ENCODE measurements at regions of chr11 and their contacts with region 1.

Region 1: GRCh38 chr11:32893343-32894148 is 935 bp downstream of the QSER1 start:
- DNase-seq: peak in 6 of 9 donors; percentile 34 to 67 (median 42)
- ATAC-seq: peak; percentile 47
- H3K4me3 ChIP-seq: peak overlapping the region; percentile 71
- H3K4me3 Mint-ChIP-seq: peak overlapping the region; percentile 83 to 96 (median 94)
- H3K27ac ChIP-seq: peak overlapping the region; percentile 71
- H3K27ac Mint-ChIP-seq: peak overlapping the region; percentile 58 to 95 (median 80)
- H3K4me1 ChIP-seq: peaks cover 5 to 15% of the 10 kb centered on the region in 2 donors
- H3K4me1 Mint-ChIP-seq: peaks cover 26 to 46% (median 38%) of the 10 kb centered on the region in 7 donors
- H3K27me3 ChIP-seq: no peaks in the 10 kb centered on the region
- H3K27me3 Mint-ChIP-seq: peaks cover 0 to 21% (median 0%) of the 10 kb centered on the region in 5 donors

Region 2: DNA sequence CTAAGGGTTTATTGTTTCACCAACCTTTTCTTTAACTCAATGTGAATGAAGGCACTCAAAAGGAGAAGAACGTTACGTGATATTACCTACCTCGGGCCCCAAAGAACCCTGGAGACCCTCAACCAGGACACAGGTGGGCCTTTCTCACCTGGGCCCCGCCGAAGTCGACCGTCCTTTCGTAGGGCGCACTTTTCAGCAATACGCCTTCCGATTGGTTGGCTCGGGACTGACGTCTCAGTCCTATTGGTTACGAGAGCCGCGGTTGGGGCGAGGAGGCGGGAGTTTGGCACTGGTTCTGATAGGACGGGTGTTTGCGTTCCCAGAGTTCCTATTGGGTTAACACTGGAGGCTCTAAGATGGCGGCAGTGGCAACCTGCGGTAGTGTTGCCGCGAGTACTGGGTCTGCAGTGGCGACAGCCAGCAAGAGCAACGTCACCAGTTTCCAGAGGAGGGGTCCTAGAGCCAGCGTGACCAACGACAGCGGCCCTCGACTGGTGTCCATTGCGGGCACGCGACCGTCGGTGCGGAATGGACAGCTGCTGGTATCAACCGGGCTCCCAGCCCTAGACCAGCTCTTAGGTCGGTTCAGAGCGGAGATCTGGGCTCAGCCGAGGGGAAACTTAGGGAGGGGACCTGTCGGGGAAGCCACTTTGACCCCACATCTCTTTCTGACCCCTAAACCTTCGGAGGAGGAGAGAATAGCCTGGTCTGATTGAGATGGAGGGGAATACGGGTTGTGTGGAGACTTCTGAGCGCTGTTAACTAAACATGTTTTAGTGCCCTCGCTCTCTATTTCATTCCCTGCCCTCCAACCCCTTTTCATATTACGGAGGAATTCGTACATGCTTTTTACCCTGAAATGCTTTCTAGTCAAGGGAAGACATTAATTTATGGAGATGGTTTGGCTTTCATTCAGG is 1383.9 kb before region 1 on chr11 and contains the starts of genes ELP4 and IMMP1L:
- CTCF ChIA-PET with region 1: no interaction called
- POLR2A ChIA-PET with region 1: no interaction called
- intact Hi-C with region 1: loop called in 1 of 2 experiments (anchors 2 kb)
- DNase-seq: peak; percentile 86 to 97 (median 95)
- ATAC-seq: peak; percentile 100
- H3K4me3 ChIP-seq: peak within 1 kb of the TSS; percentile 85
- H3K4me3 Mint-ChIP-seq: peak within 1 kb of the TSS; percentile 89 to 100 (median 99)
- H3K27ac ChIP-seq: peak within 1 kb of the TSS; percentile 79
- H3K27ac Mint-ChIP-seq: peak within 1 kb of the TSS; percentile 92 to 100 (median 98)
- H3K4me1 ChIP-seq: peaks cover 13 to 14% of the 10 kb centered on the region in 2 donors
- H3K4me1 Mint-ChIP-seq: peaks cover 21 to 70% (median 49%) of the 10 kb centered on the region in 7 donors
- H3K27me3 ChIP-seq: no peaks in the 10 kb centered on the region
- H3K27me3 Mint-ChIP-seq: peaks cover 0 to 2% (median 0%) of the 10 kb centered on the region in 5 donors
- total RNA-seq, gene ELP4: 16.8 to 23.2 (median 21.2) TPM
- total RNA-seq, gene IMMP1L: 9.4 to 20.0 (median 16.1) TPM

Region 3: GRCh38 chr11:32829680-32830412 is 63.7 kb before region 1 on chr11 and contains the start of gene PRRG4:
- CTCF ChIA-PET with region 1: no interaction called
- POLR2A ChIA-PET with region 1: no interaction called
- intact Hi-C with region 1: loop called in 1 of 2 experiments (anchors 2 kb)
- DNase-seq: peak in 3 of 9 donors; percentile 7 to 68 (median 31)
- ATAC-seq: peak; percentile 78
- H3K4me3 ChIP-seq: peak within 1 kb of the TSS; percentile 52
- H3K4me3 Mint-ChIP-seq: peak within 1 kb of the TSS; percentile 76 to 90 (median 82)
- H3K27ac ChIP-seq: no peak within 1 kb of the TSS
- H3K27ac Mint-ChIP-seq: peak within 1 kb of the TSS in 1 of 9 donors; percentile 80
- H3K4me1 ChIP-seq: peaks cover 0 to 4% of the 10 kb centered on the region in 2 donors
- H3K4me1 Mint-ChIP-seq: peaks cover 0 to 23% (median 13%) of the 10 kb centered on the region in 7 donors
- H3K27me3 ChIP-seq: no peaks in the 10 kb centered on the region
- H3K27me3 Mint-ChIP-seq: peaks cover 32 to 42% (median 39%) of the 10 kb centered on the region in 5 donors
- total RNA-seq, gene PRRG4: 0.11 to 2.3 (median 0.48) TPM in 3 of 5 experiments, not detected in the others

Region 4: DNA sequence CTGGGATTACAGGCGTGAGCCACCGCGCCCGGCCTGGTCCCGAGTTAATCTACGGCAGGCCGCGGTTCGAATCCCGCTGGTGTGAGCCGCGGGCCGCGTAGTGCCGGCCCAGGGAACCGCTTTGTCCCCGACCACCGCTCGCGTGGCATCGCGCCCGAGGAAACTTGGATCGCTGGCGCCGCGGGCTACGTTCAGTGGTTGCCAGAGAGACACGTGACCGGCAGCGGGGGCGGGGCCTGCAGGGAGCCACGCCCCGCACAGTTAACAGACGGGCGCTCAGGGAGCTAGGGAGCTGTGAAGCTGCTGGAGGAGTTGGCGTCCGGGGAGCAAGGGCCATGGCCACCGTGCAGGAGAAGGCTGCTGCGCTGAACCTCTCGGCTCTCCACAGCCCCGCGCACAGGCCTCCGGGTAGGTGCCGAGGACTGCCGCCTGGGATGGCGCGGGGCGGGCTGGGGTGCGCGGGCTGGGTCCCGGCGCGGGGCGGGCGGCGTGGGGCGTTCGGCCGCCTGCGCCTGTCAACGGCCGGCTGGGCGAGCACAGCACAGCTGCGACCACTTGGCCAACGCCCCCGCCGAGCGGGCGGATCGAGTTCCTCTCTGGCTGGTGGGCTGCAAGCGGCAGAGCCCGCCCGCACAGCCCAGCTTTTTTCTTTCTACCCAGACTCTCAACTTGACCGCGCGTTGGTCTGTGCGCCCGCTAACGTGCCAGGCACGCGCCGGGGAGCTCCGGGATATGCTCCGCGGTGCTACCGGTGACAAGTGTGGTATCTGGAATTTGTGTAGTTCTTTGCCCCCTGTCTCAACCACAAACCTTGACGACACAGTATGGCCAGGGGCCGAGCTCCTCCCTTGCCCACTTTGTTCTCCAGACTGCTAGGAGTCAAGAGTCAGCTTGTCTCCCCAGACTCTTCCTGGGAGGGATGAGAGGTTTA is 122.3 kb after region 1 on chr11 and contains the start of gene DEPDC7:
- CTCF ChIA-PET with region 1: no interaction called
- POLR2A ChIA-PET with region 1: interaction called, 4 read pairs
- intact Hi-C with region 1: loop called (anchors 2 to 5 kb)
- DNase-seq: peak; percentile 72 to 84 (median 81)
- ATAC-seq: peak; percentile 90
- H3K4me3 ChIP-seq: peak within 1 kb of the TSS; percentile 65
- H3K4me3 Mint-ChIP-seq: peak within 1 kb of the TSS; percentile 86 to 93 (median 90)
- H3K27ac ChIP-seq: peak within 1 kb of the TSS; percentile 50
- H3K27ac Mint-ChIP-seq: peak within 1 kb of the TSS in 6 of 9 donors; percentile 63 to 77 (median 69)
- H3K4me1 ChIP-seq: peaks cover 14 to 23% of the 10 kb centered on the region in 2 donors
- H3K4me1 Mint-ChIP-seq: peaks cover 14 to 73% (median 58%) of the 10 kb centered on the region in 7 donors
- H3K27me3 ChIP-seq: peaks cover 0 to 7% of the 10 kb centered on the region in 2 donors
- H3K27me3 Mint-ChIP-seq: peaks cover 0 to 74% (median 5%) of the 10 kb centered on the region in 5 donors
- total RNA-seq, gene DEPDC7: 0.65 to 9.6 (median 2.1) TPM

Region 5: GRCh38 chr11:33700425-33701271 is 807.1 kb after region 1 on chr11 and contains the start of gene C11orf91:
- CTCF ChIA-PET with region 1: no interaction called
- POLR2A ChIA-PET with region 1: no interaction called
- intact Hi-C with region 1: loop called (anchors 2 kb)
- DNase-seq: peak; percentile 88 to 98 (median 95)
- ATAC-seq: peak; percentile 99
- H3K4me3 ChIP-seq: peak within 1 kb of the TSS; percentile 54
- H3K4me3 Mint-ChIP-seq: peak within 1 kb of the TSS; percentile 84 to 96 (median 92)
- H3K27ac ChIP-seq: no peak within 1 kb of the TSS
- H3K27ac Mint-ChIP-seq: peak within 1 kb of the TSS; percentile 61 to 84 (median 76)
- H3K4me1 ChIP-seq: peaks cover 9 to 13% of the 10 kb centered on the region in 2 donors
- H3K4me1 Mint-ChIP-seq: peaks cover 14 to 27% (median 23%) of the 10 kb centered on the region in 7 donors
- H3K27me3 ChIP-seq: no peaks in the 10 kb centered on the region
- H3K27me3 Mint-ChIP-seq: peaks cover 0 to 31% (median 5%) of the 10 kb centered on the region in 5 donors
- total RNA-seq, gene C11orf91: not detected

Region 6: GRCh38 chr11:34438529-34439507 is 1545.3 kb after region 1 on chr11 and contains the start of gene CAT:
- CTCF ChIA-PET with region 1: no interaction called
- POLR2A ChIA-PET with region 1: no interaction called
- intact Hi-C with region 1: loop called in 1 of 2 experiments (anchors 1 kb)
- DNase-seq: peak; percentile 94 to 98 (median 97)
- ATAC-seq: peak; percentile 98
- H3K4me3 ChIP-seq: peak within 1 kb of the TSS; percentile 90
- H3K4me3 Mint-ChIP-seq: peak within 1 kb of the TSS; percentile 88 to 98 (median 96)
- H3K27ac ChIP-seq: peak within 1 kb of the TSS; percentile 79
- H3K27ac Mint-ChIP-seq: peak within 1 kb of the TSS; percentile 89 to 97 (median 93)
- H3K4me1 ChIP-seq: peaks cover 7 to 19% of the 10 kb centered on the region in 2 donors
- H3K4me1 Mint-ChIP-seq: peaks cover 21 to 47% (median 35%) of the 10 kb centered on the region in 7 donors
- H3K27me3 ChIP-seq: no peaks in the 10 kb centered on the region
- H3K27me3 Mint-ChIP-seq: no peaks in the 10 kb centered on the region
- total RNA-seq, gene CAT: 23.3 to 55.9 (median 42.6) TPM